Naive thymus-derived CD4-positive, alpha-beta T cell (primary cell): ENCODE measurements at regions of chr3 and their contacts with region 1.

Region 1: GRCh38 chr3:183540501-183541234 is 14.8 kb downstream of the KLHL6 start:
- DNase-seq: no peak
- ATAC-seq: peak; percentile 23
- H3K4me3 ChIP-seq: no peak overlapping the region
- H3K4me3 Mint-ChIP-seq: peak overlapping the region; percentile 39 to 80 (median 58)
- H3K27ac ChIP-seq: no peak overlapping the region
- H3K27ac Mint-ChIP-seq: peak overlapping the region; percentile 68 to 93 (median 80)
- H3K4me1 ChIP-seq: peaks cover 11 to 57% of the 10 kb centered on the region in 2 donors
- H3K4me1 Mint-ChIP-seq: peaks cover 69 to 99% (median 97%) of the 10 kb centered on the region in 7 donors
- H3K27me3 ChIP-seq: no peaks in the 10 kb centered on the region
- H3K27me3 Mint-ChIP-seq: no peaks in the 10 kb centered on the region

Region 2: DNA sequence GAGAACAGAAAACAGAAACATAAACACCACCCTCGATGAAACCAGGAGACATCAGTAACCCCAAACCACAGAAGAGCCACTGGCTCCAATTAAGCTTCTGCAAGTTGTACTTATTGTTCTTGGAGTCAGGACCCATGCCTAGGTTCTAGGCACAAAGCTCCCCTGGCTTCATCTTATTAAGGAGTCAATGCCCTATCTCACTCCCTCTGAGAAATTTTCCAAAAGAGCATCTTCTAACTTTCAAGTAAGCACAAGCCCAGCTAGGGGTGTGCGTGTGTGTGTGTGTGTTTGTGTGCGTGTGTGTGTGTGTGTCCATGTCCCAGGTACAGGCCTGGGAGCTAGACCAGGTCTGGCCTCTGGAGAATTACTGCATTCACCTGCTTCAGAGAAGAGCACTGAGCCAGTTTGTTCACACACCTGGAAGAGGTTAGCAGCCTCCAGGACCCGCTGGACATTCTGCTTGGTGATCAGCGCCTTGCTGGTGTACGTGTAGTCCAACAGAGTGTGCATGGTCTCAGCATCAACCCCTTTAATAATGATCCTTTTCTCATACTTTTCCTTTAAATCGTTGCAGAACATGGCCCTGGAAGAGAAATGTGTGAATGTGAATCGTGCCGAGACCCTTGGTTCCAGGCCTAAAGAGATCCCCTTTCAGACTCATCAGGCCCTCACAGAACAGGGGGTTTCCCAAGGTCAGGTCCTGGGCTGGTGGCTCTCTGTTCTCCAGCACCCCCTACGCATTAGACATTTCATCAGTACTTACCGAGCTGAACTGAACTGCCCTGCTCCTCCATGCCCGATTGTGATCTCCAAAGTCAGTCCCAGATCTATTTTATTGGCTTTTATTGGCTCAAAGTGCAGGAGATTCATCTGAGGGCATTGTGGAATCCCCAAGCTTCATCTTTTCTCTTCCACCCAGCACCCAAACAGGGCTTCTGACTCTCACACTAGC is 13.0 kb before region 1 on chr3:
- CTCF ChIA-PET with region 1: interaction called, 4 read pairs
- POLR2A ChIA-PET with region 1: interaction called, 3 read pairs
- intact Hi-C with region 1: loop called in 1 of 2 experiments (anchors 1 kb)
- DNase-seq: no peak
- ATAC-seq: peak; percentile 45
- H3K4me3 ChIP-seq: no peak overlapping the region
- H3K4me3 Mint-ChIP-seq: peak overlapping the region in 2 of 10 donors; percentile 20 to 86
- H3K27ac ChIP-seq: no peak overlapping the region
- H3K27ac Mint-ChIP-seq: peak overlapping the region; percentile 48 to 88 (median 71)
- H3K4me1 ChIP-seq: peaks cover 0 to 5% of the 10 kb centered on the region in 2 donors
- H3K4me1 Mint-ChIP-seq: peaks cover 35 to 65% (median 57%) of the 10 kb centered on the region in 7 donors
- H3K27me3 ChIP-seq: no peaks in the 10 kb centered on the region
- H3K27me3 Mint-ChIP-seq: no peaks in the 10 kb centered on the region